CD8-positive, alpha-beta T cell (primary cell): ENCODE measurements at regions of chr3 and their contacts with region 1.

Region 1: DNA sequence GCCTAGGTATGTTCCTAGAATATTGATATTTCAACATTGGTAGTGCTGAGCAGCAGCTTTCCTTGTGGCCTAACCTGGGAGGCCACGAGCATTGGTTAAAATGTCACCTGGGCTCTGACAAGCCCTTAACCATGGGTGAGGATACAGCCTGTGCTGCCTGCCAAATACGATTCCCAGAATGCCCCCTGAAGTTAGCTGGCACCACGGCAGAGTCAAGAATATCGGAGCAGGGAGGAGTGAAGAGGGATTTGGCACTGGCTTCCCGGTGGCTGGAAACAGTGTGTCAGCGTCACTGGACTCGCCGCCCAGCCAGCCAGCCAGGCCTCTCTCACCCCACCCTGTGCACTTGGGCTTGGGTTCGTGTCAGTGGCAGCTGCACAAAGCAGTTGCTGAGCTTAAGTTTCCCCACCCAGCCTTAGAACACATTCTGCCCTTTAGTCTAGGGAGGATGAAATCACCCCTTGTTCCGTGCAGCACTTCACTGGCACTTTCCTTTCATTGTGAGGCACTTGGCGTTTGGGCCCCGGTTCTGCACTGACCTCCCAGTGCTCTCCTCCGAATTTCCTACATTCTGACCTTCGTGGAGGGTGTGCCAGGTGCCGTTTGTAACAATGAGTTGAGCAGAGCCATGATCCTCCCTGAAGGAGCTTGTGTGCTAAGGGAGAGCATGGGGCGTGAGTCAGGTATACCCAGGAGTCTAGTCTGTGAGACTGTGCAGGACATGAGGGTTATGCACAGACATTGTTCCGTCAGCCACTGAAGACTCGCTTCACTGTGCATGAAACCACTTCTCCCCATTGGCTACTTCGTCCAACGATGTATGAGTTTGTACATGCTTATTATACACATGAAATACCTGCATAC is 152.8 kb upstream of the BHLHE40 start:
- DNase-seq: no peak
- ATAC-seq: no peak
- H3K4me3 ChIP-seq: peak overlapping the region in 1 of 2 experiments; percentile 0
- H3K4me3 Mint-ChIP-seq: peak overlapping the region; percentile 64
- H3K27ac ChIP-seq: no peak overlapping the region
- H3K27ac Mint-ChIP-seq: no peak overlapping the region
- H3K4me1 ChIP-seq: peaks cover 82% of the 10 kb centered on the region
- H3K4me1 Mint-ChIP-seq: peaks cover 94% of the 10 kb centered on the region
- H3K27me3 ChIP-seq: no peaks in the 10 kb centered on the region
- H3K27me3 Mint-ChIP-seq: no peaks in the 10 kb centered on the region
- CTCF ChIP-seq: no peak

Region 2: DNA sequence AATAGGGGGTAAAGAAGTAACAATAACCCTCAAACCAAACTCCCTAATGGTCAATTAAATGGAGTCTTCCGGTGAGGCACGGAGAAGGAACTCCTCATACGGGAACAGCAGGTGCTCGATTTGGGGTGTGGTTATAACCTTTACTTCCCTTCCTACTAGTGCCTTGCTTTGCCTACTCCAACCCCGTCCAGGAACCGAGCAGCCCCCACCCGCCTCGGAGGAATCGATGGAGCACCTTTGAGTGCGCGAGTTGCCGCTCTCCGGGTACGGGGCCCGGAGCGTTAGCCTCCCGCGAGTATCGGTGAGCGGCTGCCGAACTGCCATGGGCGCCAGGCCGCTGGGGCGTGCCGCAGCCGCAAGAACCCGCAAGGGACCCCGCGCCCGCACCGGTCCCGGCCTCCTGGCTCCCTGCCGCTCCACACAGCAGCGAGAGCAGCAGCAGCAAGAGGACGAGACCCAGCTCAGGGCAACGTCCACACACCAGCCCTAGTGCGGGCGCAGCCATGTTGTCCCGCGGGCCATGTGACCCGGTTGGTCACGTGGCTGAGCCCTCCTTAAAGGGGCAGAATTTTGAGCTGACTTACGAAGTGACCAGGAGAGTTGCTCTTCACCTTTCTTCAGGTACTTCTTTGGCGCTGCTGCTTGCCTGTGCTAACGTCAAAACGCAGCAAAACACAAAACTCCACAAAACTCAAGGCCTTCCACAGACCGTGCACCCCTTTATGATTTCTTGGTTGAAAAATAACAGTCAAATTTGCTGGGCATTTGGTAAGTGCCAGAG is 359.5 kb before region 1 on chr3 and contains the start of gene SUMF1:
- CTCF ChIA-PET with region 1: no interaction called
- POLR2A ChIA-PET with region 1: no interaction called
- intact Hi-C with region 1: no loop called
- DNase-seq: peak; percentile 34 to 85 (median 73)
- ATAC-seq: peak; percentile 93
- H3K4me3 ChIP-seq: peak within 1 kb of the TSS; percentile 75 to 76
- H3K4me3 Mint-ChIP-seq: peak within 1 kb of the TSS; percentile 91
- H3K27ac ChIP-seq: peak within 1 kb of the TSS; percentile 68 to 72
- H3K27ac Mint-ChIP-seq: peak within 1 kb of the TSS; percentile 95
- H3K4me1 ChIP-seq: peaks cover 13% of the 10 kb centered on the region
- H3K4me1 Mint-ChIP-seq: peaks cover 23% of the 10 kb centered on the region
- H3K27me3 ChIP-seq: no peaks in the 10 kb centered on the region
- H3K27me3 Mint-ChIP-seq: no peaks in the 10 kb centered on the region
- CTCF ChIP-seq: no peak
- total RNA-seq, gene SUMF1: 7.6 to 7.8 TPM

Region 3: GRCh38 chr3:4504340-4505261 is 321.9 kb before region 1 on chr3:
- CTCF ChIA-PET with region 1: no interaction called
- POLR2A ChIA-PET with region 1: no interaction called
- intact Hi-C with region 1: loop called in 1 of 2 experiments (anchors 10 kb)
- DNase-seq: peak in 6 of 9 experiments; percentile 36 to 85 (median 56)
- ATAC-seq: peak; percentile 78
- H3K4me3 ChIP-seq: peak overlapping the region; percentile 47 to 48
- H3K4me3 Mint-ChIP-seq: peak overlapping the region; percentile 88
- H3K27ac ChIP-seq: peak overlapping the region; percentile 36 to 83
- H3K27ac Mint-ChIP-seq: peak overlapping the region; percentile 94
- H3K4me1 ChIP-seq: peaks cover 20% of the 10 kb centered on the region
- H3K4me1 Mint-ChIP-seq: peaks cover 60% of the 10 kb centered on the region
- H3K27me3 ChIP-seq: no peaks in the 10 kb centered on the region
- H3K27me3 Mint-ChIP-seq: no peaks in the 10 kb centered on the region
- CTCF ChIP-seq: no peak

Region 4: DNA sequence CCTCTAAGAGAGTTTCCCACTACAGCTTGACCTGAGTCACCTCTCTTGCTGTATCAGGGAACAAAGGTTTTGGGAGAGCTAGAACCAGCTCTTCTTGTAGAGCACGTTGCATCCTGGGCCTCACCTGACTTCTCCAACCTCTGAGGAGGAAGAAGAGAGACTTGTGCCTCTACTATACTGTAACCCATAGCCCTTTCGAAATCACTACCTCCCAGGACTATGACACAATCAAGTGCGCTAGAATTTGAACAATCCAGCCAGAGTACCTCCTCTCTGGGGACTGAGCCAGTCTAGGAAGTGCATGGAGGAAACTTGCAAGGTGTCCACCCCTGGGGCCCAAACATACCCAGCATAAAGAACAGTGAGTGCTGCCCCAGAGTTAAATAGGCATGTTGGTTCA is 40.0 kb before region 1 on chr3:
- CTCF ChIA-PET with region 1: no interaction called
- POLR2A ChIA-PET with region 1: no interaction called
- intact Hi-C with region 1: no loop called
- DNase-seq: no peak
- ATAC-seq: no peak
- H3K4me3 ChIP-seq: no peak overlapping the region
- H3K4me3 Mint-ChIP-seq: no peak overlapping the region
- H3K27ac ChIP-seq: no peak overlapping the region
- H3K27ac Mint-ChIP-seq: no peak overlapping the region
- H3K4me1 ChIP-seq: no peaks in the 10 kb centered on the region
- H3K4me1 Mint-ChIP-seq: no peaks in the 10 kb centered on the region
- H3K27me3 ChIP-seq: no peaks in the 10 kb centered on the region
- H3K27me3 Mint-ChIP-seq: no peaks in the 10 kb centered on the region
- CTCF ChIP-seq: no peak

Region 5: DNA sequence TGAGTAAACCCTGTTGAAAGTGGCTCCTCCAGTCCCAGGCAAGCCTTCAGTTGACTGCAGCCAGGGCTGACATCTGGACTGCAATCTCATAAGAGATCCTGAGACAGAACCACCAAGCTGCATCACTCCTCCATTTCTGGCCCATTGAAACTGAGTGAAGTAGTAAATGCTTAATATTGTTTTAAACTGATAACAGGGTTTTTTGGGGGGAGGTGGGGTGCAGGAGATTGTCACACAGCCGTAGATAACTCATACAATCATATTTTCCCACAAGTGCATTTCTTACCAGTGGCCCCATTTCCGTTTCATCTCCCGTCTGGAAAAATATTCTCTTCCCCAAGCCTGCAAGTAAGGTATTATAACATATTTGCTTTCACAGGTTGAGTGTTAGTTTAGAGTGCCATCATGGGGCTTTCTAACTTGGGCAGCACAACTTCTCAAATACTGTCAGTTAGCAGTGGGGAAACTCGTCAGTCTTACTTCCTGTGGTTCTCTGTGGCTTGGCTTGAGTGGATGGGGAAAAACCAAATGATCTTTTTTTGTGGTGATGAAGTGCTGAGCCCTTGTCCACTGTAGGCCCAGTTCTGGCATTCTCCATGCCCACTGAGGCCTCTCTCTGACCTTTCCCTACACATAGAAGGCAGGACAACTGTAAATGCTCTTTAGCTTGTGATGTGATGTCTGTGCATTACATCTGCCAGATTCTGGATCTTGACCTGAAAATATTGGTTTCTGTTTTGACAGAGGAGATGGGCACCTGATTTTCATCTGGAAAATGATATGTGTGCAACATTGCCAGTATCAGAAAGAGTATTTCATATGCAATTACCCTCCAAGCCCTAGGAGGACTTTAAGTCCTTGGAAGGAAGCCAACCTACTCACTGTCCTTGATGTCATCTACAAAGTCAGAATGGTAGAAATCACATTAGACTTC is 62.7 kb after region 1 on chr3:
- CTCF ChIA-PET with region 1: interaction called, 3 read pairs
- POLR2A ChIA-PET with region 1: no interaction called
- intact Hi-C with region 1: loop called in 1 of 2 experiments (anchors 2 kb)
- DNase-seq: peak in 4 of 9 experiments; percentile 11 to 83 (median 43)
- ATAC-seq: peak; percentile 79
- H3K4me3 ChIP-seq: no peak overlapping the region
- H3K4me3 Mint-ChIP-seq: no peak overlapping the region
- H3K27ac ChIP-seq: peak overlapping the region in 1 of 2 experiments; percentile 45
- H3K27ac Mint-ChIP-seq: peak overlapping the region; percentile 64
- H3K4me1 ChIP-seq: peaks cover 17% of the 10 kb centered on the region
- H3K4me1 Mint-ChIP-seq: peaks cover 19% of the 10 kb centered on the region
- H3K27me3 ChIP-seq: no peaks in the 10 kb centered on the region
- H3K27me3 Mint-ChIP-seq: no peaks in the 10 kb centered on the region
- CTCF ChIP-seq: no peak

Region 6: DNA sequence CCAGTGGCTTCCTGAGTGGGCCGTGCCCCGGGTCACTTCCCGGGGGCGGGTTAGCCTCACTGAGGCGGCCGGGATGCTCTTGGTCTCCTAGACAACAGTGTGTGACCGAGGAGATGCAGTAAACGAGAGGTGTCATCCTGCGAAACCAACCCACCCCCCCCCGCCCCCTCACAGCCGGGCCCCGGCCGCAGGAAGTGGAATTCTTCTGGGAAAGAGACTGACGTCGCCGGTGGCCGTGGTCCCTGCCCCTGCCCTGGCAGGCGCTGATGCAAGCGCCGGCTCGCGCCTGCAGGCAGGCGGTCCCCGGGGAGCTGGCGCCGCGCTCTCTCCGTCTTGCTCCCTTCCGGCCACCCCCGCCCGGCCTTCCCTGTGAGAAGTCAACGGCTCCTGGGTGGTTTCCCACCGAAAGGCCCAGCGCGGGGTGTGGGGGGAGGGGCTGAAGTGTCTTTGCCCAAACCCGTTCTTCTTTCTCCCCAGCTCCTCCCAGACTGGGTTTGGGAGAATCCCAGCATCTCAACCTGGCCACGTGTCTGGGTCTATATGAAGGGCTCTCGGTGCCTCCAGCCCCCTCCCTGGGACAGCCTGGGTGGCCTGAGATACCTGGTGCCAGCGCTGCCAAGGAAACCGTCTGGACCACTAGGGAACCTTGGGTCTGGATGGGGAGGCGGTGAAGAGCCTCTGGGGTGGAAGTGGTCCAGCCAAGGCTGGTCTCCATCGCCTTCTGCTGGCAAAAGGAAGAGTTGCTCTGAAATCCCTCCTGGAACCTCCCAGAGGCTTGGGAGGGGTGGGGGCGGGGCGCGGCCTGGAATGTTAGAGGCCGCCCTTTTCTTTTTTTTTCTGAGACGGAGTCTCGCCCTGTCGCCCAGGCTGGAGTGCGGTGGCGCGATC is 200.1 kb after region 1 on chr3:
- CTCF ChIA-PET with region 1: interaction called, 3 read pairs
- POLR2A ChIA-PET with region 1: no interaction called
- intact Hi-C with region 1: loop called (anchors 2 kb)
- DNase-seq: peak in 8 of 9 experiments; percentile 41 to 90 (median 66)
- ATAC-seq: peak; percentile 74
- H3K4me3 ChIP-seq: peak overlapping the region; percentile 57 to 77
- H3K4me3 Mint-ChIP-seq: peak overlapping the region; percentile 80
- H3K27ac ChIP-seq: peak overlapping the region; percentile 33 to 39
- H3K27ac Mint-ChIP-seq: peak overlapping the region; percentile 77
- H3K4me1 ChIP-seq: peaks cover 4% of the 10 kb centered on the region
- H3K4me1 Mint-ChIP-seq: peaks cover 12% of the 10 kb centered on the region
- H3K27me3 ChIP-seq: no peaks in the 10 kb centered on the region
- H3K27me3 Mint-ChIP-seq: peaks cover 6% of the 10 kb centered on the region
- CTCF ChIP-seq: peak; percentile 52

Region 7: DNA sequence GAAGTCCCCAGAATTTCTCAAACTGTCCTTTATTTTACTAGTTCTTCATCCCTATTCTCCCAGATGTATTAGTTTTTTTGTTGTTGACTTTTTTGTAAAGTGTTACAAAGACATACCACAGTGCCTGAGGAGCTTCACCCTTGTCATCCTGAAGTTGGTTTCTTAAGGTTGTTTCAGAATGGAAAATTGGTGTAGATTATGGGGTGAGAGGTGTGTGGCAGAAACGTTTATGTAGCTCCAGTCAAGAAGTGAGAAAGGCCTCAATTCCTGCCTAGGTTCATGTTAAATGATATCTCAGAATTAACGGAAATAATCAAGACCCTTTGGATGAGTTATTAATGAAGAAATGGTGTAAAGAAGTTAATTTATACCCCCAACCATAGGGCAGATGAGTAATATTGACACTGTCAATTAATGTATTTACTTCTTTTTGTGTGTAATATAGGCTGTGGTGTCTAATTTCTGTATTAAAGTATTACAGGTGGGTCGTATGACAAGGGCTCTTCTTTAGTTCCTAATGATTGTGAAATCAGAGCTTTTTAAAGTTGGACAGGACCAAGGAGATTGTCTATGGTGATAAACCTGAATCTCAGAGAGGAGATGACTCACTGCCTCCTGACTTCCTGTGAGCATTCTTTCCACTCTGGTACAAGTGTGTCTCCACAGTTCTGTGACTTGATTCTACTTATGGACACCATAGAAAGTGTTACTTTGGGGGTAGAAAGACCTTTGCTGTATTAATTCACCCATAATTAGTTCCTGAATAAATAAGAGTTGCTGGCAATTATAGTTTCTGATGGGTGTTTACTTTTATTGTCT is 368.1 kb after region 1 on chr3:
- CTCF ChIA-PET with region 1: no interaction called
- POLR2A ChIA-PET with region 1: no interaction called
- intact Hi-C with region 1: loop called in 1 of 2 experiments (anchors 10 kb)
- DNase-seq: peak in 5 of 9 experiments; percentile 34 to 81 (median 51)
- ATAC-seq: peak; percentile 56
- H3K4me3 ChIP-seq: no peak overlapping the region
- H3K4me3 Mint-ChIP-seq: peak overlapping the region; percentile 1
- H3K27ac ChIP-seq: peak overlapping the region in 1 of 2 experiments; percentile 65
- H3K27ac Mint-ChIP-seq: peak overlapping the region; percentile 85
- H3K4me1 ChIP-seq: peaks cover 90% of the 10 kb centered on the region
- H3K4me1 Mint-ChIP-seq: peaks cover 86% of the 10 kb centered on the region
- H3K27me3 ChIP-seq: no peaks in the 10 kb centered on the region
- H3K27me3 Mint-ChIP-seq: no peaks in the 10 kb centered on the region
- CTCF ChIP-seq: no peak